ENCODE measurements at regions of chr6 and their contacts with region 1.

Region 1: DNA sequence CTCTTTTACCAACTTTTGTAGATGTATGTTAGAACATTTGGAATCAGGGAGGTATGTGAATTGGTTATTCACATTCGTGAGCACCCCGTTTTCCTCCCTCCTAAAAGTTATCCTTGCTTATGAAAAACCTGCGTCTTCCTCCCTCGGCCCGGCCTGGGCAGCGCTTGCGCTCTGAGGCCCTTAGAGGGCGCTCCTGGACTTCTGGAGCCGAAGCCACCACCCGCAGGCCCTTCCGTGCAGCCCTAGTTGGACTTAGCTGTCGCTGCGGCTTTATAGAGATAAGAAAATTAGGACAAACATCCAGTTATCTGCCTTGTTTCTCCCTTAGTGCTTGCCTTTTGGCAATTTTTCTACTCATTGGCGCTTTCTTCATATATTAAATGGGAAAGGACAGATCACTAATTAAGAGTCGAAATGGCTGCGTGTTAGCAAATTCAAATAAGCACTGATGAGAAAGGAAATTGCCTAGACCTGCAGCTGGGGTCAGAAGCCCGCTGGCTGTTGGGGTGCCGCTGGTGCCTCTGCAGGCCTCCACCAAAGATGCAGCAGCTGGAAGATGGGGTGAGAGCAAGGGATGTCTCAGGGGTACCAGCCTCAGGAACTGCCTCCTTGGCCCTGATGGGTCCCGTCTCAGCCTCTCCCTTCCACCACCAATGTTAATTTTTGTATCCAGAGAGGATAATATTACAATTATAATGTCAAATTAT is 5.2 kb downstream of the FNDC1 start:
- DNase-seq: peak; percentile 22 to 67 (median 45)
- ATAC-seq: peak; percentile 84
- H3K4me3 ChIP-seq: no peak overlapping the region
- H3K4me3 Mint-ChIP-seq: peak overlapping the region in 9 of 10 donors; percentile 19 to 69 (median 36)
- H3K27ac ChIP-seq: no peak overlapping the region
- H3K27ac Mint-ChIP-seq: no peak overlapping the region
- H3K4me1 ChIP-seq: peaks cover 0 to 9% of the 10 kb centered on the region in 2 donors
- H3K4me1 Mint-ChIP-seq: peaks cover 4 to 18% (median 10%) of the 10 kb centered on the region in 7 donors
- H3K27me3 ChIP-seq: peaks cover 6 to 16% of the 10 kb centered on the region in 2 donors
- H3K27me3 Mint-ChIP-seq: peaks cover 51 to 66% (median 59%) of the 10 kb centered on the region in 5 donors

Region 2: GRCh38 chr6:159252955-159253508 is 78.6 kb after region 1 on chr6:
- CTCF ChIA-PET with region 1: no interaction called
- POLR2A ChIA-PET with region 1: no interaction called
- intact Hi-C with region 1: loop called in 1 of 2 experiments (anchors 2 kb)
- DNase-seq: peak in 4 of 9 donors; percentile 4 to 14 (median 12)
- ATAC-seq: peak; percentile 69
- H3K4me3 ChIP-seq: no peak overlapping the region
- H3K4me3 Mint-ChIP-seq: peak overlapping the region in 1 of 10 donors; percentile 21
- H3K27ac ChIP-seq: no peak overlapping the region
- H3K27ac Mint-ChIP-seq: no peak overlapping the region
- H3K4me1 ChIP-seq: no peaks in the 10 kb centered on the region
- H3K4me1 Mint-ChIP-seq: peaks cover 0 to 5% (median 0%) of the 10 kb centered on the region in 7 donors
- H3K27me3 ChIP-seq: no peaks in the 10 kb centered on the region
- H3K27me3 Mint-ChIP-seq: peaks cover 2 to 32% (median 16%) of the 10 kb centered on the region in 5 donors

Region 3: DNA sequence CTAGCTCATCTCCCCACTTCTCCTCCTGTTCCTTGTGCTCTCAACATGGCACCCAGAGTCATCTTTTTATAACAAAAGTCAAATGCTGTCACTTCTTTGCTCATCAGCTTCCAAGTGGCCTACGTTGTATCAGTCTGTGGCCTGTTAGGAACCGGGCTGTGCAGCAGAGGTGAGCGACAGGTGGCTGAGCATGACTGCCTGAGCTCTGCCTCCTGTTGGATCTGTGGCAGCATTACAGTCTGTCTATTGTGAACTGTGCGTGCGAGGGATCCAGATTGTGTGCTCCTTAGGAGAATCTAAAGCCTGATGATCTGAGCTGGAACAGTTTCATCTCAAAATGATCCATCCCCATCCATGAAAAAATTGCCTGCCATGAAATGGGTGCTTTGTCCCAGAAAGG is 124.4 kb after region 1 on chr6:
- CTCF ChIA-PET with region 1: no interaction called
- POLR2A ChIA-PET with region 1: no interaction called
- intact Hi-C with region 1: loop called in 1 of 2 experiments (anchors 10 kb)
- DNase-seq: no peak
- ATAC-seq: no peak
- H3K4me3 ChIP-seq: no peak overlapping the region
- H3K4me3 Mint-ChIP-seq: no peak overlapping the region
- H3K27ac ChIP-seq: no peak overlapping the region
- H3K27ac Mint-ChIP-seq: no peak overlapping the region
- H3K4me1 ChIP-seq: no peaks in the 10 kb centered on the region
- H3K4me1 Mint-ChIP-seq: no peaks in the 10 kb centered on the region
- H3K27me3 ChIP-seq: no peaks in the 10 kb centered on the region
- H3K27me3 Mint-ChIP-seq: peaks cover 14 to 52% (median 46%) of the 10 kb centered on the region in 5 donors

Region 4: DNA sequence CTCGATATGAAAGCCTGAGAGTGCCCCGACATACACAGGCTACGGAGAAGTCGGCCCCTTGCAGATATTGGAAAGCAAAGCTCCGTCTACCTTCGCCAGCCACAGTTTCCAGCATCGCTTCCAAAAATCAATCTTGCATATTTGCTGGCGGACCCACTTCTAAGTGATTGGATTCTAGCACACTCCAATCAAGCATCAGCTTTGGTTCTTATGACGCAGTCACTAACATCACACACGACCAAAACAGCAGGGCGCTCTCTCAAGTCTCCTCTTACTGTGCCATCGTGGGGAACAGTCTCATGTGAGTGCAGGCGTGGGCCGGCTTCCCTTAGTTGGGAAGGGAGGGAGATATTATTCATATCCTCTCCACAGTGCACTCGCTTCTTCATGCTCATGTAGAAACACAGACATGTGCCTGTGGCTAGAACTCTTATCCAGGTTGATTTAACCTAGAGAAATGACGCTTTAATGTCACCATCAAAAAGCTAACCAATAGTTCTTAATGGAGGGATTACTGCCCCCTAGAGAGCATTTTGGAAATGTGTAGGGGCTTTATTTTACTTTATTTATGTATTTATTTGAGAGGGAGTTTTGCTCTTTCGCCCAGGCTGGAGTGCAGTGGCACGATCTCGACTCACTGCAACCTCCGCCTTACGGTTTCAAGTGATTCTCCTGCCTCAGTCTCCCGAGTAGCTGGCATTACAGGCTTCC is 288.9 kb after region 1 on chr6:
- CTCF ChIA-PET with region 1: no interaction called
- POLR2A ChIA-PET with region 1: no interaction called
- intact Hi-C with region 1: loop called in 1 of 2 experiments (anchors 5 kb)
- DNase-seq: no peak
- ATAC-seq: no peak
- H3K4me3 ChIP-seq: no peak overlapping the region
- H3K4me3 Mint-ChIP-seq: no peak overlapping the region
- H3K27ac ChIP-seq: no peak overlapping the region
- H3K27ac Mint-ChIP-seq: no peak overlapping the region
- H3K4me1 ChIP-seq: peaks cover 0 to 5% of the 10 kb centered on the region in 2 donors
- H3K4me1 Mint-ChIP-seq: peaks cover 0 to 4% (median 0%) of the 10 kb centered on the region in 7 donors
- H3K27me3 ChIP-seq: no peaks in the 10 kb centered on the region
- H3K27me3 Mint-ChIP-seq: peaks cover 8 to 32% (median 18%) of the 10 kb centered on the region in 5 donors

Region 5: DNA sequence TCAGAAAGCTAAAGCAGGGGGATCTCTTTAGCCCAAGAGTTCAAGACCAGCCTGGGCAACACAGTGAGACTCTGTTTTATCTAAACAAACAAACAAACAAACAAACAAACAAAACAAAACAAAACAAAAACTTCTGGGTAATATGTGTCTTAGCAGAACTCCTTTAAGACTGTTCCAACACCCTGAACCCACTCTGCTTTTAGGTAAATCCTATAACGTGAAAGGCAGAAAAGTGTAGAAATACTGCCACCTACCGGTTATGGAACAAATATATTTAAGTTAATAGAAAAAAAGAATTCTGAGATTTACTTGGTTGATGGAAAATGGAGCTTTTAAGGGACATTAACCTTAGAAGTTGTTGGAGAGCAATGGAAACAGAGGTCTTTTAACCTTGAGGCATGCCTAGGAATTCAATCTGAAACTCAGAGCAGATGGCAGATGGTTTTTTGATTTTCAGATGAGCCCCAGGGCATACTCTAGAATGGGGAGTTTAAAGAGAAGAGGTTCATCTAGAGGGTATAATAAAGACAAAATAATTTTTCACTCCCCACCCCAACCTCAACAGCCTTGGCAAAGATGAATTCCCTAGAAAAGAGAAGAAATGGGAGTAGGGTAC is 480.2 kb after region 1 on chr6:
- CTCF ChIA-PET with region 1: interaction called, 15 read pairs
- POLR2A ChIA-PET with region 1: no interaction called
- intact Hi-C with region 1: loop called (anchors 1 to 2 kb)
- DNase-seq: peak in 6 of 9 donors; percentile 8 to 53 (median 47)
- ATAC-seq: peak; percentile 60
- H3K4me3 ChIP-seq: no peak overlapping the region
- H3K4me3 Mint-ChIP-seq: no peak overlapping the region
- H3K27ac ChIP-seq: no peak overlapping the region
- H3K27ac Mint-ChIP-seq: no peak overlapping the region
- H3K4me1 ChIP-seq: no peaks in the 10 kb centered on the region
- H3K4me1 Mint-ChIP-seq: peaks cover 0 to 6% (median 0%) of the 10 kb centered on the region in 7 donors
- H3K27me3 ChIP-seq: no peaks in the 10 kb centered on the region
- H3K27me3 Mint-ChIP-seq: peaks cover 0 to 2% (median 0%) of the 10 kb centered on the region in 5 donors

Region 6: GRCh38 chr6:159941286-159942113 is 767.1 kb after region 1 on chr6:
- CTCF ChIA-PET with region 1: interaction called, 4 read pairs
- POLR2A ChIA-PET with region 1: no interaction called
- intact Hi-C with region 1: loop called in 1 of 2 experiments (anchors 1 kb)
- DNase-seq: peak in 7 of 9 donors; percentile 23 to 55 (median 40)
- ATAC-seq: peak; percentile 85
- H3K4me3 ChIP-seq: no peak overlapping the region
- H3K4me3 Mint-ChIP-seq: no peak overlapping the region
- H3K27ac ChIP-seq: no peak overlapping the region
- H3K27ac Mint-ChIP-seq: no peak overlapping the region
- H3K4me1 ChIP-seq: no peaks in the 10 kb centered on the region
- H3K4me1 Mint-ChIP-seq: peaks cover 0 to 7% (median 0%) of the 10 kb centered on the region in 7 donors
- H3K27me3 ChIP-seq: no peaks in the 10 kb centered on the region
- H3K27me3 Mint-ChIP-seq: peaks cover 0 to 28% (median 3%) of the 10 kb centered on the region in 5 donors

Region 7: DNA sequence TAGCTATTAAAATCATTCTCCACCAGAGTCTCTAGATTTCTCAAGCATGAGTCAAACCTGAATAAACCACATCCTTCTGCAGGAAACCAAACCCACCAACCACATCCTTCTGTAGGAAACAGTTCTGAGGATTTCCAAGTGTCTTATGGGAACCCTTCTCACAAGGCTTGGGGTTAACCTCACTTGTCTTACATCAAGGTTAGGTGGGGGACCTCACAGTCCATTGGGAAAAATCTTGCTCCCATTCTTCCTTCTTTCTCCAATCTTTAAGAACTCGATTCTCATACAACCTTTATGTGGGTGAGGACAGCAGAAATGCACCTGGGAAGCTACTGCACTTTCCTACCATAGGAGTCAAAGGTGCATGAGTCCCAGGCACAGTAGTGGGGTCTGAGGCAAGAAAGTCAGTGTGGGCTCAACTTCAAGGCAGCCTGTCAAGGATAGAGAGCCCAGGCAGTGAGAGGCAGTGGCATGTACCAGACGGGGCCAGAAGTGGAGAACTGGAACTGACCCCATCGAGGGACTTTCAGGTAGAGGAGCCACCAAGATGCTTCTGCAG is 1288.2 kb after region 1 on chr6:
- CTCF ChIA-PET with region 1: no interaction called
- POLR2A ChIA-PET with region 1: no interaction called
- intact Hi-C with region 1: loop called in 1 of 2 experiments (anchors 5 kb)
- DNase-seq: peak in 8 of 9 donors; percentile 69 to 93 (median 90)
- ATAC-seq: peak; percentile 95
- H3K4me3 ChIP-seq: peak overlapping the region; percentile 47
- H3K4me3 Mint-ChIP-seq: peak overlapping the region; percentile 60 to 89 (median 72)
- H3K27ac ChIP-seq: no peak overlapping the region
- H3K27ac Mint-ChIP-seq: peak overlapping the region; percentile 53 to 98 (median 88)
- H3K4me1 ChIP-seq: peaks cover 50 to 56% of the 10 kb centered on the region in 2 donors
- H3K4me1 Mint-ChIP-seq: peaks cover 33 to 81% (median 71%) of the 10 kb centered on the region in 7 donors
- H3K27me3 ChIP-seq: no peaks in the 10 kb centered on the region
- H3K27me3 Mint-ChIP-seq: peaks cover 0 to 52% (median 10%) of the 10 kb centered on the region in 5 donors